ENCODE measurements at regions of chr1 and their contacts with region 1.

Region 1: DNA sequence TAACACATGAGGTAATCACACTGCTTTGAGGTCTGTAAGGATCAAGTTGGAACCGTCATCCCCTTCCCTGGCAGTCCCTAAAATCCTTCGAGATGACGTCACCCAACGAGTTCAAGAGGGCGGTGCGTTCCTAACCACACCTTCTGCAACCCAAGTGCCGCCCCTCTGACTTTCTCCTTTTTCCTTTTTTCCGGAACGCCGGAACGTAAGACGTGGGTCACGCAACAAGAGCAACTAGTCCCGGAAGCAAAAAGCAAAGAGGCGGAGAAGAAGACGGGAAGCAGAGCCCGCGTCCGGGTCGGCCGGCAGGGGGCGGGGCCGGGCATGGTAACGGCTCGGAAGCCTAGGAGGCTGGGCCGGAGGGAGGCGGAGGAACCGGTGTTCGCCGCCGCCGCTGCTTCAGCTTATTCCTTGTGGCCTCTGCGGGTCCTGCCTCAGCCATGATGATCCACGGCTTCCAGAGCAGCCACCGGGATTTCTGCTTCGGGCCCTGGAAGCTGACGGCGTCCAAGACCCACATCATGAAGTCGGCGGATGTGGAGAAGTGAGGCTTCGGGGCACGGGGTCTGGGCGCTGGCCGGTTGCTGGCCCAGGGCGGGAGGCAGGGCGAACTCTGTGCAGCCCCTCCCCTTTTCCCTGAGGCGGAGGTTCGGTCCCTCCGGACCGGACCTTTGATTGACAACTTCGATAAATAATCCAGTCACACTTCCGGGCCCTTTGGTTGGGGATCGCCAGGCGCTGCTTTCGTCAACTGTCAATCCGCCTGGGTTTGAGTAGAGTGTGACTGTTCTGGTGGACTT is at the start of gene TIPRL:
- DNase-seq: peak; percentile 85 to 97 (median 92)
- ATAC-seq: peak; percentile 89
- H3K4me3 ChIP-seq: peak within 1 kb of the TSS; percentile 89
- H3K4me3 Mint-ChIP-seq: no peak within 1 kb of the TSS
- H3K27ac ChIP-seq: peak within 1 kb of the TSS; percentile 95 to 96
- H3K27ac Mint-ChIP-seq: no peak within 1 kb of the TSS
- H3K4me1 ChIP-seq: peaks cover 22% of the 10 kb centered on the region
- H3K4me1 Mint-ChIP-seq: peaks cover 15% of the 10 kb centered on the region
- H3K27me3 ChIP-seq: no peaks in the 10 kb centered on the region
- H3K27me3 Mint-ChIP-seq: peaks cover 12% of the 10 kb centered on the region
- CTCF ChIP-seq: peak; percentile 63
- total RNA-seq, gene TIPRL: 15.8 to 16.4 TPM

Region 2: DNA sequence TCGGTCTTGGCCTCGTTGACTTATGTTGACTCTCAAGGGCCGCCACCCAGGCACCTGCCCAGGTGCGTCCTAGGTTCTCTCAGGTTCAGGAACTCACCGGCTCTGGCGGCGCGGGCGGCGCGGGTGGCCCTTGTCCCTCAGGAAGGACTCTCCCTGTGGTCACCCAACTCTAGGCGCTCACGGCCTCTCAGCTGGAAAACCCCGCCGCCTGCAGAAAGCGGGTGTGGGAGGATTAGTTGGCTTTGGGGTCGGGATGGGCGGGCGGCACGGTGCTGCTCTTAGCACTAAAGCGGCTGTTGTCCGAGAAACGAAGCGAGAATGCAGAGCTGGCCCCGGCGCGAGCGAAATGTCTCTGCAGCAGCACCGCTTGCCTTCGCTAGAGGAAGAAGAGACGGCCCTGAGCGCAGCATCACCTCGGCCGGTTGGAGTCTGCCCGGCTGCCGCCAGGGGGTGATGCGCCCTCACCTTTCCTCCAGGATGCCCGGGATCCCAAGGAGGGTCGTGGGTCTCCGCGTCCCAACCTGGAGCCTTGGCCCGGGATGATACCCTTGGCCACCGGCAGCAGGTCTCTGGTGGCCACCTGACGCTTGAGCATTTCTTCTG is 1294.7 kb before region 1 on chr1:
- CTCF ChIA-PET with region 1: no interaction called
- POLR2A ChIA-PET with region 1: no interaction called
- intact Hi-C with region 1: loop called in 1 of 2 experiments (anchors 5 kb)
- DNase-seq: peak in 11 of 14 experiments; percentile 2 to 57 (median 19)
- ATAC-seq: peak; percentile 78
- H3K4me3 ChIP-seq: no peak overlapping the region
- H3K4me3 Mint-ChIP-seq: no peak overlapping the region
- H3K27ac ChIP-seq: no peak overlapping the region
- H3K27ac Mint-ChIP-seq: no peak overlapping the region
- H3K4me1 ChIP-seq: peaks cover 13% of the 10 kb centered on the region
- H3K4me1 Mint-ChIP-seq: peaks cover 22% of the 10 kb centered on the region
- H3K27me3 ChIP-seq: peaks cover 23 to 26% of the 10 kb centered on the region in 2 experiments
- H3K27me3 Mint-ChIP-seq: peaks cover 45% of the 10 kb centered on the region
- CTCF ChIP-seq: peak; percentile 45

Region 3: DNA sequence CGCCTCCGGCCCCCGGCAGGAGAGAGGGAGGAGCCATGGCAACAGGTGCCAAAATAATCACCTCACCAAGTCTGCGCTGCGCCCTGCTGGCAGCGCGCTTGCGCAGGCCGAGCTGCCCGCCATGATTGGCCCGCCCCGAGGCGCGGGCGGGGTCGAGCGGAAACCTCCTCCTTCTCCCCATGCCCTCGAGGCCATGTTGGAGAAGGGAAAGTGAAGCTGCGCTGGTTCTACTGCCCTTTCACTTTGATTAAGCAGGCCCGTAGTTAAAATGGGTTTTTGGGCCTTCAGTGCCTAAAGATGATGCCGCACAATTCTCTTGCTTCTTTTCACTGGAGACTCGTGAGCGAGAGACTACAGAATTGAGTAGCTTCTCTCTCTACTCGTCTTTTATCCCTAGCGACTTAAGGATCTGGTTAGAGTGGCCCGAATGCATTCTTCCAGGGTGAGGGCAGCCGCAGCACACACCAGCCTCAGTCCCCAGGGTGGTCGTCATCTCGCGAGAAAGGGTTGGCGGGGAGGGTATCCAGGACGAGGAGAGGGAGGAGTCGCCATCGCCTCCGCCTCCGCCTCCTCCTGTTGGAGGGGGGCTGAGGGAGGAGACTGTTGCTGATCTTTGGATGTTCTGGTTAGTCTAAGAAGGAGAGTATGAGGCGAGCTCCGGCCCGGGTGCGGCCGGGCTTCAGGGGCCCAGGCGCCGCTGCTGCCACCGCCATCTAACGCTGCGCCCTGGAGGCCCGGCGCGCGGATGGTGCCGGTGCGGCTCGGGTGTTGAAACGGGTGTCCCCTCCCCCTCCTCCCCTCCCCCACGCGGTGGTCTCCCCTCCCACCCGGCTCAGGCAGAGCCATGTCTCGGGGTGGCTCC is 242.5 kb before region 1 on chr1 and contains the start of gene DCAF6:
- CTCF ChIA-PET with region 1: no interaction called
- POLR2A ChIA-PET with region 1: no interaction called
- intact Hi-C with region 1: loop called (anchors 1 kb)
- DNase-seq: peak; percentile 93 to 100 (median 96)
- ATAC-seq: peak; percentile 81
- H3K4me3 ChIP-seq: peak within 1 kb of the TSS; percentile 95
- H3K4me3 Mint-ChIP-seq: peak within 1 kb of the TSS; percentile 94
- H3K27ac ChIP-seq: peak within 1 kb of the TSS; percentile 77 to 96
- H3K27ac Mint-ChIP-seq: peak within 1 kb of the TSS; percentile 99
- H3K4me1 ChIP-seq: peaks cover 5% of the 10 kb centered on the region
- H3K4me1 Mint-ChIP-seq: peaks cover 62% of the 10 kb centered on the region
- H3K27me3 ChIP-seq: no peaks in the 10 kb centered on the region
- H3K27me3 Mint-ChIP-seq: no peaks in the 10 kb centered on the region
- CTCF ChIP-seq: no peak
- total RNA-seq, gene DCAF6: 13.3 to 13.6 TPM

Region 4: GRCh38 chr1:169106095-169106920 is 927.5 kb after region 1 on chr1 and contains the start of gene ATP1B1:
- CTCF ChIA-PET with region 1: no interaction called
- POLR2A ChIA-PET with region 1: no interaction called
- intact Hi-C with region 1: loop called in 1 of 2 experiments (anchors 5 kb)
- DNase-seq: peak; percentile 56 to 88 (median 72)
- ATAC-seq: peak; percentile 89
- H3K4me3 ChIP-seq: peak within 1 kb of the TSS; percentile 74
- H3K4me3 Mint-ChIP-seq: peak within 1 kb of the TSS; percentile 94
- H3K27ac ChIP-seq: no peak within 1 kb of the TSS
- H3K27ac Mint-ChIP-seq: peak within 1 kb of the TSS; percentile 5
- H3K4me1 ChIP-seq: peaks cover 36% of the 10 kb centered on the region
- H3K4me1 Mint-ChIP-seq: peaks cover 43% of the 10 kb centered on the region
- H3K27me3 ChIP-seq: no peaks in the 10 kb centered on the region
- H3K27me3 Mint-ChIP-seq: peaks cover 4% of the 10 kb centered on the region
- CTCF ChIP-seq: no peak
- total RNA-seq, gene ATP1B1: 3.5 to 4.5 TPM

Region 5: GRCh38 chr1:169794530-169795416 is 1615.9 kb after region 1 on chr1 and contains the start of gene METTL18:
- CTCF ChIA-PET with region 1: no interaction called
- POLR2A ChIA-PET with region 1: no interaction called
- intact Hi-C with region 1: loop called in 1 of 2 experiments (anchors 5 kb)
- DNase-seq: peak; percentile 82 to 96 (median 88)
- ATAC-seq: peak; percentile 97
- H3K4me3 ChIP-seq: peak within 1 kb of the TSS; percentile 81
- H3K4me3 Mint-ChIP-seq: peak within 1 kb of the TSS; percentile 99
- H3K27ac ChIP-seq: peak within 1 kb of the TSS; percentile 89 to 94
- H3K27ac Mint-ChIP-seq: peak within 1 kb of the TSS; percentile 94
- H3K4me1 ChIP-seq: peaks cover 13% of the 10 kb centered on the region
- H3K4me1 Mint-ChIP-seq: peaks cover 52% of the 10 kb centered on the region
- H3K27me3 ChIP-seq: no peaks in the 10 kb centered on the region
- H3K27me3 Mint-ChIP-seq: no peaks in the 10 kb centered on the region
- CTCF ChIP-seq: no peak
- total RNA-seq, gene METTL18: 5.1 to 5.6 TPM